Calu3 (cell line): ENCODE measurements at regions of chr14 and their contacts with region 1.

Region 1: DNA sequence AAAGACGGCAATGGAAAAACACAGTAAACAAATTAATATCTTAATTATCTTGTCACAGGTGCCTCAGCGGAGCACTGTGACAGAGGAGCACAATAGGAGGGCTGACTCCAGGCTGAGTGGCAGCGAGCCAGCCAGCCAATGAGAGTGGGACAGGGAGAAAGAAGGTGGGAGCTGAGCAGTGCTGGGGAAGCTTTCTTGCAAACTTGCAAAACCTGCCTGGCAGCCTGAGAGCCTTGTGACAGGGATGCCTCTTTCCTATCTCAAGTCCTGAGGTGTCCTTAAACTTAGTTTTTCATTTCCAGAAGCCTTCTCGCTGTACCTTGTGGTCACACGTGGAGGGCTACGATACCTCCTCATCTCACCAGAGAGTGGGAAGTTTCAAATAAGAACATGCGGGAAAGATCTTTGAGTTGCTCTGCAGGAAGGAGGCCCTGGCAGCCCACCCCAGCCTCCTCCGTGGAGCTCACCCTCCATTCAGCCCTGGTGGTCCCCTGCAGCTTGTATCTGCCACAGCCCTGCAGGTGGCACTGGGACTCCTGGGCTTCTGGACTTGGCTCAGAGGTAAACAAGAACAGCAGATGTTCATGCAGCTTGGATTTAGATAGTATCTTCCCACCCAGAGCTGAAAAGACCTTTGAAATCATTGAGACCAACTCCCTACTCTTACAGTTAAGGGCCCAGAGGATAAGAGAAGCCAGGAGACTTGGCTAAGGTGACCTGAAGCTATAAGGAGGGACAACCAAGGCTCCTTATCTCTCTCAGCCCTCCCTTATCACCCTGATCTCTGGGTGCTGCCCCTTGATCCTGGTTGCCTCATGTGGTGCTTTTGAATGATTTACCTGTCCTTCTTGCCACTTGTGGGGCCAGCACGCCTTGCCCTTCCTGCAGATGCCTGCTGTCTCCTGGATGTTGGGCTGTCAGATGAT is 153.5 kb upstream of the MAX start:
- DNase-seq: peak; percentile 89
- H3K4me3 Mint-ChIP-seq: peak overlapping the region; percentile 24
- H3K27ac Mint-ChIP-seq: peak overlapping the region; percentile 94
- H3K4me1 Mint-ChIP-seq: peaks cover 63% of the 10 kb centered on the region
- H3K27me3 Mint-ChIP-seq: no peaks in the 10 kb centered on the region
- CTCF ChIP-seq: no peak

Region 2: GRCh38 chr14:65318636-65319506 is 63.1 kb after region 1 on chr14:
- CTCF ChIA-PET with region 1: interaction called, 10 read pairs
- intact Hi-C with region 1: no loop called
- DNase-seq: no peak
- H3K4me3 Mint-ChIP-seq: no peak overlapping the region
- H3K27ac Mint-ChIP-seq: peak overlapping the region; percentile 81
- H3K4me1 Mint-ChIP-seq: peaks cover 30% of the 10 kb centered on the region
- H3K27me3 Mint-ChIP-seq: no peaks in the 10 kb centered on the region
- CTCF ChIP-seq: no peak